CD8-positive, alpha-beta T cell (primary cell): ENCODE measurements at regions of chr2 and their contacts with region 1.

Region 1: DNA sequence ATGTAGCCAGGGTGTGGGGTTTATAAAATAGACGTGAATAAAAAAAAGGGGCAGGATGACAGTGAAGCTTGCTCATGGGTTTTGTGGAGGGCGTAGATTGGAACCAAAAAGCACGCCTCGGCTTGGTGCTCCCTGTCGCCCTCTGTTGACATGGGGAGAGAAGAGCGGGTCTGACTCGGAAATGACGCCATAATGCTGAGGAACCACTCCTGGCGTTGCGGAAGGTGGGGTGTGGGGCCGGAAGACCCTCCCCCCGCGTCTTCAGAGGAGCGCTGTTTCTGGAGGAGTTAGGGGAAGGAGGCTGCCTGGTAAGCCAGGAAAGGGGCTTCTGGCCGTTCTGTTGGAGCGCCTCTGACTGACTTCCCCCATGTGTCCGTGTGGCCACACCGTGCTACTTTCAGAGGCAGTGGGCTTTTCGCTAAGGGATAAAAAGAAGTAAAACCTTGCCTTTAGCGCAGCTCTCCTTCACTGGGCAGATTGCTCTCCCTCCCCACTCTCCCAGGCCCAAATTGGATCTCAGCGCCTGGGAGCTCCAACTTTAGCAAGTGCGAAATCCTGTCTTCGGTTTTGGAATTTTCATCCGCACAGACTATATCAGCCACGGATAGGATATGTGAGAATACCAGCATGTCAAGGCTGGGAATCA is 42.8 kb downstream of the PLEKHA3 start:
- DNase-seq: peak; percentile 58 to 92 (median 81)
- ATAC-seq: peak; percentile 99
- H3K4me3 ChIP-seq: peak overlapping the region; percentile 65 to 82
- H3K4me3 Mint-ChIP-seq: peak overlapping the region; percentile 94
- H3K27ac ChIP-seq: peak overlapping the region; percentile 55 to 74
- H3K27ac Mint-ChIP-seq: peak overlapping the region; percentile 90
- H3K4me1 ChIP-seq: peaks cover 10% of the 10 kb centered on the region
- H3K4me1 Mint-ChIP-seq: peaks cover 41% of the 10 kb centered on the region
- H3K27me3 ChIP-seq: no peaks in the 10 kb centered on the region
- H3K27me3 Mint-ChIP-seq: no peaks in the 10 kb centered on the region
- CTCF ChIP-seq: peak; percentile 83

Region 2: DNA sequence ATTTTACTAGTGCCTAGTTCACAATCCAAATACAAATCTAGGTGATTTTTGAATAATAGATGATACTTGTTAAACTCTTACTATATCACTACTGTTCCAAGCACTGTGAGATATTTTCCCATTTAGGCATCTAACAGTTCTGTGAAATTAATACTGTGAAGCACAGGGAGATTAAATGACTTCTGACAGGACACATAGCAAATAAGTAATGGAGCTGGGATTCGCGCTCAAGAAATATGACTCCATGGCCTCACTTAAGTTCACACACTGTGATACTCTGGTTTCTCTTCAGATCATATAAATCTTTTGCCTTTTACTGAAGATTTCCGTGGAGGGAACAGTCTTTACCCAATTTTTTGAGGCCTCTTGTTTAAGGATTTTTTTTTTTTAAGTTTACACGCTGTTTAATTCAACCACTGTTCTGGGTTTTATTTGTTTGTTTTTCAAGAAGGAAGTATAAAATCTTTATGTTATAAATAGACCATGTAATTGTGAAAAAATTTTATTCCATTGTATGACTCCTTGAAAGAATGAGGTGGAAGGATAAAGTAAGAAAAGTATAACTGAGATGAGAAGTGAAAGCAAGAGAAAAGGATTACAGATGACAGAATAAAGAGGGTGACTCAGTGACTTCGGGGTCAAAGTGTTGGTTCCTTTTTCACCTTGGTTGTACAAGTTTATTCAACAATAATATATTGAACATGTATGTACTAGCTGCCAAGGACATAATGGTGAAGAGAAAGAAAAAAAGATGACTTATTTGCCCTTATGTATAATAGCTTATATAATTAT is 380.6 kb before region 1 on chr2:
- CTCF ChIA-PET with region 1: no interaction called
- POLR2A ChIA-PET with region 1: no interaction called
- intact Hi-C with region 1: no loop called
- DNase-seq: no peak
- ATAC-seq: no peak
- H3K4me3 ChIP-seq: no peak overlapping the region
- H3K4me3 Mint-ChIP-seq: no peak overlapping the region
- H3K27ac ChIP-seq: no peak overlapping the region
- H3K27ac Mint-ChIP-seq: no peak overlapping the region
- H3K4me1 ChIP-seq: no peaks in the 10 kb centered on the region
- H3K4me1 Mint-ChIP-seq: no peaks in the 10 kb centered on the region
- H3K27me3 ChIP-seq: peaks cover 0 to 3% of the 10 kb centered on the region in 2 experiments
- H3K27me3 Mint-ChIP-seq: peaks cover 13% of the 10 kb centered on the region
- CTCF ChIP-seq: no peak

Region 3: GRCh38 chr2:178397002-178397605 is 126.0 kb before region 1 on chr2:
- CTCF ChIA-PET with region 1: no interaction called
- POLR2A ChIA-PET with region 1: no interaction called
- intact Hi-C with region 1: loop called in 1 of 2 experiments (anchors 5 kb)
- DNase-seq: peak in 2 of 9 experiments; percentile 55 to 67
- ATAC-seq: peak; percentile 62
- H3K4me3 ChIP-seq: no peak overlapping the region
- H3K4me3 Mint-ChIP-seq: no peak overlapping the region
- H3K27ac ChIP-seq: no peak overlapping the region
- H3K27ac Mint-ChIP-seq: no peak overlapping the region
- H3K4me1 ChIP-seq: no peaks in the 10 kb centered on the region
- H3K4me1 Mint-ChIP-seq: no peaks in the 10 kb centered on the region
- H3K27me3 ChIP-seq: no peaks in the 10 kb centered on the region
- H3K27me3 Mint-ChIP-seq: peaks cover 7% of the 10 kb centered on the region
- CTCF ChIP-seq: peak; percentile 84

Region 4: GRCh38 chr2:178450774-178451525 is 72.1 kb before region 1 on chr2 and contains the starts of genes PJVK and PRKRA:
- CTCF ChIA-PET with region 1: interaction called, 3 read pairs
- POLR2A ChIA-PET with region 1: interaction called, 3 read pairs
- intact Hi-C with region 1: loop called (anchors 1 kb)
- DNase-seq: peak; percentile 89 to 98 (median 95)
- ATAC-seq: peak; percentile 92
- H3K4me3 ChIP-seq: peak within 1 kb of the TSS; percentile 73 to 93
- H3K4me3 Mint-ChIP-seq: peak within 1 kb of the TSS; percentile 90
- H3K27ac ChIP-seq: peak within 1 kb of the TSS; percentile 76 to 90
- H3K27ac Mint-ChIP-seq: peak within 1 kb of the TSS; percentile 95
- H3K4me1 ChIP-seq: peaks cover 19% of the 10 kb centered on the region
- H3K4me1 Mint-ChIP-seq: peaks cover 34% of the 10 kb centered on the region
- H3K27me3 ChIP-seq: no peaks in the 10 kb centered on the region
- H3K27me3 Mint-ChIP-seq: no peaks in the 10 kb centered on the region
- CTCF ChIP-seq: no peak
- total RNA-seq, gene PJVK: 2.9 to 5.3 TPM
- total RNA-seq, gene PRKRA: 116 to 127 TPM

Region 5: GRCh38 chr2:178478439-178479274 is 44.4 kb before region 1 on chr2 and contains the start of gene FKBP7:
- CTCF ChIA-PET with region 1: interaction called, 5 read pairs
- POLR2A ChIA-PET with region 1: no interaction called
- intact Hi-C with region 1: loop called (anchors 1 to 2 kb)
- DNase-seq: peak; percentile 79 to 95 (median 86)
- ATAC-seq: peak; percentile 82
- H3K4me3 ChIP-seq: peak within 1 kb of the TSS; percentile 84 to 88
- H3K4me3 Mint-ChIP-seq: peak within 1 kb of the TSS; percentile 98
- H3K27ac ChIP-seq: peak within 1 kb of the TSS; percentile 92 to 93
- H3K27ac Mint-ChIP-seq: peak within 1 kb of the TSS; percentile 99
- H3K4me1 ChIP-seq: peaks cover 39% of the 10 kb centered on the region
- H3K4me1 Mint-ChIP-seq: peaks cover 51% of the 10 kb centered on the region
- H3K27me3 ChIP-seq: no peaks in the 10 kb centered on the region
- H3K27me3 Mint-ChIP-seq: no peaks in the 10 kb centered on the region
- CTCF ChIP-seq: peak; percentile 87
- total RNA-seq, gene FKBP7: 0.69 to 0.79 TPM

Region 6: GRCh38 chr2:180006781-180007579 is 1483.9 kb after region 1 on chr2 and contains the start of gene CWC22:
- CTCF ChIA-PET with region 1: no interaction called
- POLR2A ChIA-PET with region 1: no interaction called
- intact Hi-C with region 1: loop called in 1 of 2 experiments (anchors 5 kb)
- DNase-seq: peak; percentile 74 to 96 (median 86)
- ATAC-seq: peak; percentile 93
- H3K4me3 ChIP-seq: peak within 1 kb of the TSS; percentile 72 to 88
- H3K4me3 Mint-ChIP-seq: peak within 1 kb of the TSS; percentile 93
- H3K27ac ChIP-seq: peak within 1 kb of the TSS; percentile 98 to 99
- H3K27ac Mint-ChIP-seq: peak within 1 kb of the TSS; percentile 99
- H3K4me1 ChIP-seq: peaks cover 14% of the 10 kb centered on the region
- H3K4me1 Mint-ChIP-seq: peaks cover 38% of the 10 kb centered on the region
- H3K27me3 ChIP-seq: no peaks in the 10 kb centered on the region
- H3K27me3 Mint-ChIP-seq: no peaks in the 10 kb centered on the region
- CTCF ChIP-seq: no peak
- total RNA-seq, gene CWC22: 13.8 to 15.3 TPM

Region 7: DNA sequence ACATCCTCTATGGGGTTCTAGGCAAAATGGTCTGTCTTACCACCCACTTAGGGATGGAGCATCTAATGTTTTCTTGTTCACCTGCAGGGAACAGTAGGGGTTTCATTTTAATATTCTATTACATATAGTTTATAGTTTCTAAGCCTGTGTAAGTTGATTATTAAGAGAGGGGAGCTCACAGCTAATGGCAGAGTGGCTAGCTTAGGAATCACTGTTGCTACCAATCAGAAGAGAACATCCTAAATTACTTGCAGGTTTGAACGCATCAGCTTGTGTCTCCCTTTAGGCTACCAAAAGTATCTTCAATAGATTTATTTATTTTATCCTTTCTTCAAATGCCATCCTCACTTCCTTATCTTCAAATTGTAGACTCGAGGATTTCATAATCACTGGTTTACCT is 1914.4 kb after region 1 on chr2:
- CTCF ChIA-PET with region 1: no interaction called
- POLR2A ChIA-PET with region 1: no interaction called
- intact Hi-C with region 1: no loop called
- DNase-seq: no peak
- ATAC-seq: no peak
- H3K4me3 ChIP-seq: no peak overlapping the region
- H3K4me3 Mint-ChIP-seq: no peak overlapping the region
- H3K27ac ChIP-seq: no peak overlapping the region
- H3K27ac Mint-ChIP-seq: no peak overlapping the region
- H3K4me1 ChIP-seq: no peaks in the 10 kb centered on the region
- H3K4me1 Mint-ChIP-seq: no peaks in the 10 kb centered on the region
- H3K27me3 ChIP-seq: no peaks in the 10 kb centered on the region
- H3K27me3 Mint-ChIP-seq: no peaks in the 10 kb centered on the region
- CTCF ChIP-seq: no peak